ENCODE measurements at regions of chr2 and their contacts with region 1.

Region 1: DNA sequence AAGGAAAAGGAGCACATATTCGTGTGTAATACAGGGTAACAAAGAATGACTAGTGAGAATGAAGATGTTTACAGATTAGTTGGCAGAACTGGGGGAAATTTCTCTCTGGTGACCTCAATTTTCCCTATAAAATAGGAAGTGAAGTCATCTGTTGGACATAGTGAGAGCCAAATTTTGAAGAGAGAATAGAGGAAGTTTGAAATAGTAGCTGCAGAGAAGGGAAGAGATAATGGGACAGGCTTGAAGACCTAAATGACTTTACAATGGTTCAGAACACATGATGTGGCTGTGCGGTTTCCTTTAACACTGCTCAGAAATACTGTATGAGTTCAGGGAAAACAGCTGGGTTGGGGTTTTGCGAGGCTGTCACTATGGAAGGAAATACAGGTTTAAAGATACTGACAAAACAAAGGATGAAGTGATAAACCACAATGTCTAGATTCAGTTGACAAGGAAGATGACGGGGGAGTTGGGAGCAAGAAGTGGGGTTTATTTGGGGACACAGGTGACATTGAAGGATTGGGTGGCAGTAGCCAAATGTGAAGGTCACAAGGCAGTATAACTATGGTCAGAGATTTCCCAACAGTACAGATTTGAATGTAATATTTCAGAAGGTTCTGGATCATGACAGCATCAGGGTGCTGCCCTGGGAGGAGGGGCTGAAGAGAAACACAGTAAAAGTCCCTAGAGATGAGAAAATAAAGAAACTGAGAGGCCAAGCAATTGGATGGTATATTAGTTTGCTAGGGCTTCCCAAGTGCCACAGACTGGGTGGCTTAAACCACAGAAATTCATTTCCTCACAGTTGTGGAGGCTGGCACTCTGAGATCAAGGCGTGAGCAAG is 82.6 kb upstream of the TANK start:
- DNase-seq: no peak
- ATAC-seq: peak; percentile 87
- H3K4me3 Mint-ChIP-seq: peak overlapping the region; percentile 60
- H3K27ac Mint-ChIP-seq: peak overlapping the region; percentile 80
- H3K4me1 Mint-ChIP-seq: peaks cover 27% of the 10 kb centered on the region
- H3K27me3 Mint-ChIP-seq: no peaks in the 10 kb centered on the region
- CTCF ChIP-seq: no peak

Region 2: GRCh38 chr2:161063157-161063954 is 14.2 kb before region 1 on chr2:
- CTCF ChIA-PET with region 1: interaction called, 12 read pairs
- POLR2A ChIA-PET with region 1: no interaction called
- intact Hi-C with region 1: no loop called
- DNase-seq: peak; percentile 18
- ATAC-seq: peak; percentile 93
- H3K4me3 Mint-ChIP-seq: no peak overlapping the region
- H3K27ac Mint-ChIP-seq: no peak overlapping the region
- H3K4me1 Mint-ChIP-seq: peaks cover 4% of the 10 kb centered on the region
- H3K27me3 Mint-ChIP-seq: no peaks in the 10 kb centered on the region
- CTCF ChIP-seq: peak; percentile 94

Measured in activated B cell treated with CpG ODN at 0.5 μM for 24 hours (primary cell).